ENCODE measurements at regions of chr10 and their contacts with region 1.

Region 1: GRCh38 chr10:13776861-13777311 is 190.1 kb downstream of the PRPF18 start:
- DNase-seq: no peak
- H3K4me3 ChIP-seq: no peak overlapping the region
- H3K27ac ChIP-seq: no peak overlapping the region
- H3K4me1 ChIP-seq: no peaks in the 10 kb centered on the region
- H3K27me3 ChIP-seq: no peaks in the 10 kb centered on the region
- CTCF ChIP-seq: no peak
- EP300 ChIP-seq: no peak
- POLR2A ChIP-seq: no peak

Region 2: DNA sequence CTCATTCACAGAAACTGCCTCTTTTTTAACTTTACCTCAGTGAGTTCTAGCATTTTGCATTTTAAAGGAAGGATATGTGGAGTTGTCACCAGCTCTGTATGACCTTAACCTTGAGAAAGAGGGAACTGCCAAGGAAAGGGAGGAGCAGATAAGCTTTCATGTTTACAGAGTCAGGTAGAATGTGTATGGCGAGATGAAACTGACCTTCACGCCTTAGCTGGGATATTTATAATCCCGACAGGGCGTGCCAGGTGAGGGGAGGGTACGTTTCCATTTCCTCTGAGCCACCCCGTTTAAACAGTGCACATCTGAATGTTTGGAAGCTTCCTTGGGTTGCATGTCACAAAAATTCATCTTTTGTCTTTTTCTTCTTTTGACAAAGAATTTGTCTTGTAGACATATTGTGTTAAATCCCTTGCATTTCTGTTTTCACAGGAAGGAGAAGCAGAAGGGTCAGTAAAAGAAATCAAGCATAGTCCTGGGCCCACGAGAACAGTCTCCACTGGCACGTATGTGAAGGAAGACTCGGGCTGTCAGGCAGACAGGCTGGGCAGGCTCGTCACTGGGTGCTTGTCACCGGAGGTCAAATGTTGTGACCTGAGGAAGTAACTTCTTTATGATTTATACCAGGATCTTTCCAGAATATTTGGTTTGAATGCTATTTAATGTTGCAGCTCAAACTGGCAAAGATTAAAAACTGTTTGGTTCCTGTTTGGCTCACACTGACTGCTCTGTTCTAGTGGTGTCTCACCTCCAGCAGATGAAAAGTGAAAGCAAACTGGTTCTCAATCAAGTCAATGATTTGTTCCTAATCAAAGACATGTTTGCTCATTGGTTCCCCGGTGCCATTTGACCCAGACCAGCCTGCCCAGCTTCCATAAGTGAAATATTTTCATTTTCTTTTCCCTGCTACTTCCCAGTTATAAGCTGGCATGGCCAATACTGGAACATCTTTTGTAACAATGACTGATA is 660.8 kb before region 1 on chr10:
- intact Hi-C with region 1: no loop called
- DNase-seq: no peak
- H3K4me3 ChIP-seq: no peak overlapping the region
- H3K27ac ChIP-seq: peak overlapping the region in 1 of 2 donors; percentile 12
- H3K4me1 ChIP-seq: peaks cover 4% of the 10 kb centered on the region
- H3K27me3 ChIP-seq: no peaks in the 10 kb centered on the region
- CTCF ChIP-seq: no peak
- EP300 ChIP-seq: no peak
- POLR2A ChIP-seq: no peak

Region 3: DNA sequence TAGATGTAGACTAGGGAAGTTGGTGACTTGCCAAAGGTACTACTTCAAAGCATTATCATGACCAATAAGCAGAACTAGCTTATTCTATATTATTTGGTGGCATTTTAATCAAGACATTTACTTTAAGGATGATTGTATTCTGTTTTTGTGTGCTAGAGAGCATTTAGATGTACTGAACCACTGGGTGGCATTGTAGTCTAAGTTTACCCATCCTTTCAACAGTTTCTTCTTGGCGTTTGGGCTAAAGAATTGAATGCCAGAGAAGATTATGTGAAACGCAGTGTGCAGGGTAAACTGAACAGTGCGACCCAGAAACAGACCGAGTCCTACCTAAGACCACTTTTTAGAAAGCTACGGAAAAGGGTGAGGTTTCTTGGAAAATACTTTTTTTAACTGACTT is 163.4 kb before region 1 on chr10:
- intact Hi-C with region 1: loop called in 1 of 4 experiments (anchors 10 kb)
- DNase-seq: no peak
- H3K4me3 ChIP-seq: no peak overlapping the region
- H3K27ac ChIP-seq: no peak overlapping the region
- H3K4me1 ChIP-seq: no peaks in the 10 kb centered on the region
- H3K27me3 ChIP-seq: no peaks in the 10 kb centered on the region
- CTCF ChIP-seq: no peak
- EP300 ChIP-seq: no peak
- POLR2A ChIP-seq: no peak

Region 4: GRCh38 chr10:13659897-13660550 is 116.9 kb before region 1 on chr10:
- intact Hi-C with region 1: loop called (anchors 2 to 5 kb)
- DNase-seq: peak; percentile 57 to 79 (median 74)
- H3K4me3 ChIP-seq: no peak overlapping the region
- H3K27ac ChIP-seq: no peak overlapping the region
- H3K4me1 ChIP-seq: peaks cover 1% of the 10 kb centered on the region
- H3K27me3 ChIP-seq: no peaks in the 10 kb centered on the region
- CTCF ChIP-seq: peak; percentile 76 to 90 (median 83)
- EP300 ChIP-seq: no peak
- POLR2A ChIP-seq: no peak

Region 5: DNA sequence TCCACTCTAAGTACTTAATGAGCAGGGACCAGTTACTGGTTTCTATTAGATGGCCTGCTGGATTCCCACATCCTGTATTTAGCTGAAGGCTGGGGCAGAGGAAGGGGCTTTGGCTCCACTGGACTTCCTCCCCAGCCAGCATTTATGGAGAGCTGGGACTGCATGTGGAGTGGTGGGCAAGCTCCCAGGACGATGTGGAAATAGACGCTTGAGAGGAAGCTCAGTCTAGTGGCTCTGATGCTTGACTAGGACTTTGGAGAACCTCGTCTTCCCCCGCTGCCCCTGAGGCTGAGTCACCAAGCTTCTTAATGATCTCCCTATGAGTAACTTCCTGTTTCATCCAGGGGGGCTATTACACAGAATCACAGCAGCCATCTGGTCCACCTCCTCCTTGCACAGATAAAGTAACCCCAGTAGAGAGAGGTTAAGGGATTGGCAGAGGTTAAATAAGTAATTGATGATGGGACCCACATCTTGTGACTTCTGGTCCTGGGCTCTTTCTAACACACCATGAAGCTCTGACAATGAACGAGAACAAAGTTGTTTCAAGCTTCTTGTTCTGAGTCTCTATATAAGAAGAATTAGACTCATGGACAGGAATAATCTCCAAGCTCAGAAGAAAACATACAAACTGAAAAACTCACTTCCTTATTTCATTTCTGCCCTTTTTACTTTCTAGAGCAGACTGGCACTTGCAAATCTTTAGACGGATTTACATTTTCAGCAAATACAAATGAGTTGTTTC is 63.9 kb before region 1 on chr10:
- intact Hi-C with region 1: loop called in 1 of 4 experiments (anchors 10 kb)
- DNase-seq: peak in 1 of 5 donors; percentile 35
- H3K4me3 ChIP-seq: no peak overlapping the region
- H3K27ac ChIP-seq: no peak overlapping the region
- H3K4me1 ChIP-seq: peaks cover 2% of the 10 kb centered on the region
- H3K27me3 ChIP-seq: no peaks in the 10 kb centered on the region
- CTCF ChIP-seq: no peak
- EP300 ChIP-seq: no peak
- POLR2A ChIP-seq: no peak